Common myeloid progenitor, CD34-positive (primary cell): ENCODE measurements at regions of chr22 and their contacts with region 1.

Region 1: GRCh38 chr22:22508274-22509176 is at the start of gene ZNF280B:
- DNase-seq: peak; percentile 85 to 93 (median 92)
- H3K4me3 ChIP-seq: peak within 1 kb of the TSS; percentile 60 to 92 (median 76)
- H3K27ac ChIP-seq: peak within 1 kb of the TSS in 1 of 2 experiments; percentile 86
- H3K4me1 ChIP-seq: peaks cover 0 to 7% (median 5%) of the 10 kb centered on the region in 4 experiments
- H3K27me3 ChIP-seq: peaks cover 0 to 7% (median 4%) of the 10 kb centered on the region in 5 experiments

Region 2: DNA sequence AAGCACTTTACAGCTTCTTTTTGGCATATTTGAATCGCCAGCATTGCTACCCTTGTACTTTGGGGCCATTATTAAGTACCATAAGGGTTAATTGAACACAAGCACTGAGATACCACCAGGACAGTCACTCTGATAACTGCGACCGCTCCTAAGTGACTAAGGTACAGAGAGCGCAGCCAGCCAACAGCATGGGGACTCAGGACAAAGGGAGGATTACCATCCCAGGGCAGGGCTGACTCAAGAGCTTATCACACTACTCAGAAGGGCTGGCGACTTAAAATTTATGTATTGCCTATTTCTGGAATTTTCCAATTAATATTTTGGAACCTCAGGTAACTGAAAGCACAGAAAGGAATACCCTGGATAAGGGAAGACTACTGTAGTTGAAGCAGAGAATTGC is 11.1 kb after region 1 on chr22:
- CTCF ChIA-PET with region 1: interaction called, 10 read pairs
- POLR2A ChIA-PET with region 1: no interaction called
- DNase-seq: no peak
- H3K4me3 ChIP-seq: no peak overlapping the region
- H3K27ac ChIP-seq: peak overlapping the region in 1 of 2 experiments; percentile 74
- H3K4me1 ChIP-seq: no peaks in the 10 kb centered on the region
- H3K27me3 ChIP-seq: peaks cover 0 to 12% (median 3%) of the 10 kb centered on the region in 5 experiments